Ovary (tissue), 10 donors: ENCODE measurements at regions of chr12 and their contacts with region 1.

Region 1: GRCh38 chr12:113060336-113060960 is 3.9 kb downstream of the DTX1 start:
- DNase-seq: no peak
- H3K4me3 ChIP-seq: no peak overlapping the region
- H3K27ac ChIP-seq: no peak overlapping the region
- H3K4me1 ChIP-seq: peaks cover 2% of the 10 kb centered on the region
- H3K27me3 ChIP-seq: no peaks in the 10 kb centered on the region
- CTCF ChIP-seq: no peak
- EP300 ChIP-seq: no peak
- POLR2A ChIP-seq: no peak

Region 2: DNA sequence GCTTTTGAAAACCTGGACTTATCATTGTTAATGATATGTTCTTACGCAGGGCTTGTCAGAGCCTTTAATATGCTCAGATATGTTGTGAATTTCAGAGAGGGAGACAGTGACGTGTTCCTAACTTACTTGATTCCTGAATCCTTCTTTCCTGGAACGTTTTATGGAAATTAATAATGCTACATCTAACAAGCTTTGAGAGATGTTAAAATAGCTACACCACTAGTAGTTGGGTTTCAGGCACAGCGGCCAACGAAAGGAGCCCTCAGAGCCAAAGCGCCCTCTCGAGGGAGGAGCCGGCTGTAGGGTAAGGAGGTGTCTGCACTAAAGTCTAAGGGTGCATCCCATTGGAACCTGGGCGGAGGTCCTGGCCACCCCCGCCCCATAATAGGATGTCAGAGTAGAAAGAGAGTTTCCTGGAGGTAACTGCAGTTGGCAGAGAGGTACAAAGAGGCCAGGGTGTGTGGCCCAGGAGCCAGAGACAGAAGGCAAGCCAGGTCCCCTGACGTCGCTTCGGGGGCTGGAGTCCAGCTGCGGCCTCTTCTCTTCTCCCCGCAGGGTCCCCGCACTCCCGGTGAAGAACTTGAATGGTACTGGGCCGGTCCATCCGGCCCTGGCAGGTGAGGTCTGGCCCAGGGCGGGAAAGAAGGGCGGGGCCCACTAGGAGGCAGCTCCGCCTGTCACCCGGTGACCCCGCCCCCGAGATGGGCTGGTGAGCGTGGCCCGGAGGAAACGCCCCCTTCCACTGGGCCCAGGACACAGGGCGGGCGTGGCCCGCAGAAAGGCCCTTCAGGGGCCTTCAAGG is 32.4 kb after region 1 on chr12:
- intact Hi-C with region 1: no loop called
- DNase-seq: no peak
- H3K4me3 ChIP-seq: no peak overlapping the region
- H3K27ac ChIP-seq: no peak overlapping the region
- H3K4me1 ChIP-seq: no peaks in the 10 kb centered on the region
- H3K27me3 ChIP-seq: no peaks in the 10 kb centered on the region
- CTCF ChIP-seq: no peak
- EP300 ChIP-seq: no peak
- POLR2A ChIP-seq: no peak

Region 3: GRCh38 chr12:113103756-113104450 is 43.5 kb after region 1 on chr12:
- intact Hi-C with region 1: loop called in 1 of 4 experiments (anchors 1 kb)
- DNase-seq: no peak
- H3K4me3 ChIP-seq: no peak overlapping the region
- H3K27ac ChIP-seq: no peak overlapping the region
- H3K4me1 ChIP-seq: no peaks in the 10 kb centered on the region
- H3K27me3 ChIP-seq: no peaks in the 10 kb centered on the region
- CTCF ChIP-seq: no peak
- EP300 ChIP-seq: no peak
- POLR2A ChIP-seq: no peak